Esophagus muscularis mucosa (tissue), 4 donors: ENCODE measurements at regions of chr5 and their contacts with region 1.

Region 1: GRCh38 chr5:32174011-32174870 is at the start of gene GOLPH3:
- DNase-seq: peak; percentile 98
- H3K4me3 ChIP-seq: peak within 1 kb of the TSS; percentile 67 to 97 (median 82)
- H3K27ac ChIP-seq: peak within 1 kb of the TSS; percentile 96 to 100 (median 98)
- H3K4me1 ChIP-seq: peaks cover 22 to 46% (median 43%) of the 10 kb centered on the region in 4 donors
- H3K27me3 ChIP-seq: no peaks in the 10 kb centered on the region
- CTCF ChIP-seq: peak in 1 of 3 experiments; percentile 31
- EP300 ChIP-seq: no peak
- POLR2A ChIP-seq: peak; percentile 89
- total RNA-seq, gene GOLPH3: 149 to 277 (median 187) TPM

Region 2: DNA sequence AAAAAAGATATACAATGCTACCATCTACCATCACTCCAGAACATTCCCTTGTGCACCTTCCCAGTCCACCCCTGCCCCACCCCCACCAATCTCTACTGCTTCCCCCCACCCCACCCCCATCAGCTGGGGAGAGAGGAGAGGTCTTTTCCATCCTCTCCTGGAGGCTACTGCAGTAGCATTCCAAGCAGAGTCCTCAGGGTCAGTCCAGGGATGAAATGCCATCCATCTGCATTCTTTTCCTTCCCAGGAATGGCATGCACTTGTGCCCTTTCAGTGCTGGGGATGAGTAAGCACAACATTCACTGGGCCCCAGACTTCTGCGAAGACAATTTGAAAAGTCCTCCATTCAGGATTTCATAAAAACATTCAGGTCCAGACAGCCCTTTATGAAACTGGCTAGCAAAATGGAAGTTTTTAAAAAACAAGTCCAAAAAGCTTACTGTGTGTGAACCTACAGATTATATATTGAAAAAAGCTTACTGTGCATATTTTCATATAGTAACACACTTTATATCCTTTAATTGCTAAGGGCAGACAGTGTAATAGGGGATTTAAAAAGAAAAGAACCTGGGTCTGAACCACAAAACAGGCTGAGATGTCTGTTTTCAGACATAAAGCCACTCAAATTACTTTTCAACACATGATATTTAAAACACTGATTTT is 49.8 kb after region 1 on chr5:
- intact Hi-C with region 1: loop called (anchors 5 kb)
- DNase-seq: no peak
- H3K4me3 ChIP-seq: no peak overlapping the region
- H3K27ac ChIP-seq: peak overlapping the region; percentile 85 to 89 (median 87)
- H3K4me1 ChIP-seq: peaks cover 25 to 70% (median 60%) of the 10 kb centered on the region in 4 donors
- H3K27me3 ChIP-seq: no peaks in the 10 kb centered on the region
- CTCF ChIP-seq: no peak
- EP300 ChIP-seq: peak; percentile 59
- POLR2A ChIP-seq: no peak

Region 3: DNA sequence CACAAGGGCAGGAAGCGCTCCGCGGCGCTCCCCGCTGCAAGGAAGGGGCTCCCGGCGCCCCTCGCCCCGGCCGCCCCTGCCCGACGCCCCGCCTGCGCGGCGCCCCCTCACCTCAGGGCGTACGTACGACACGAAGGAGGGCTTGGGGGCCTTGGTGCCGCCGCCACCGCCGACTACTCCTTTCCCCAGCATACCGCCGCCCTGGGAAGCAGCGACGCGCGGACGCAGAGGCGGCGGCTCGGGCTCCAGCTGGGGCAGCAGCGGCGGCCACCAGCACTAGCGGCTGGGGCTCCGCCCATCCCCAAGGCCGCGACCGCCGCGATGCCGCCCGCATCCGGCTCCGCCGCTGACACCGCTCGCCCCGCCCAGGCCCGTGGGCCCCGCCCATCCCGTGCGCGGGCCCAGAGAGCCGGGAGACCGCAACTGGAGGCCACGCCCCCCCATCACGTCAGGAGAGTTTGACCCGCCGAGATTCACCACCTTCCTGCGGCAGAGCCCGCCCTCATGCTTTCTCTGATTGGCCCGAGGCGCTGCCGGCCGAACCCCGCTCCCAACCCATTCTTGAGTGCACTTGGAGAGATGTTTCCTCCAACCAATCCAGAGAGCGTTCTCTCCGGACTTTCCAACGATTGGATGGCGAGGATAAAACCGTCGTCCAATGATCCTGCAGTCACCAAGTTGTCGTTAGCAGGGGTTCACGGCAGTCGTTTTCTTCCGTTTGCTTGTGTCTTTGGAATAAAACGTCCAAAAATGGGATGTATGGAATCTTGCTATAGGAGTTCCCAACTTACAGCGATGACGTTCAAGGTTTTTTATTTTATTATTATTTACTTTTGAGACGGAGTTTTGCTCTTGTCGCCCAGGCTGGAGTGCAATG is 138.6 kb after region 1 on chr5 and contains the start of gene MTMR12:
- intact Hi-C with region 1: loop called (anchors 5 kb)
- DNase-seq: peak; percentile 100
- H3K4me3 ChIP-seq: peak within 1 kb of the TSS; percentile 61 to 99 (median 96)
- H3K27ac ChIP-seq: peak within 1 kb of the TSS; percentile 94 to 100 (median 99)
- H3K4me1 ChIP-seq: peaks cover 41 to 50% (median 47%) of the 10 kb centered on the region in 4 donors
- H3K27me3 ChIP-seq: no peaks in the 10 kb centered on the region
- CTCF ChIP-seq: no peak
- EP300 ChIP-seq: no peak
- POLR2A ChIP-seq: peak; percentile 68
- total RNA-seq, gene MTMR12: 49.9 to 94.0 (median 63.8) TPM